ENCODE measurements at regions of chr1 and their contacts with region 1.

Region 1: DNA sequence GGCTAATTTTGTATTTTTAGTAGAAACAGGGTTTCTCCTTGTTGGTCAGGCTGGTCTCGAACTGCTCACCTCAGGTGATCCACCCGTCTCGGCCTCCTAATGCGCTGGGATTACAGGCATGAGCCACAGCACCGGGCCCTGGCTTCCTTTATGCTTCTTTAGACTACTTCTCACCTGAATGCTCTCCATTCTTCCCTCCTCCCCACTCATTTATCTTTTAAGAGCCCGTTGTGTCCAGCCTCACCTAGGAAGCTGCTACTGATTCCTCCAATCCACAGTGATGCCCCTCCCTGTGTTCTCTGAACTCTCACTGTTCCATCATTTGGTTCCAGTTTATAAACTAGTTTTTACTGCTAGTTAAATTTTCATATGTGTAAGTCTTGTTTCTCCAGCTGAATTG is 44.9 kb upstream of the NR5A2 start:
- DNase-seq: no peak
- ATAC-seq: peak; percentile 79
- H3K4me3 ChIP-seq: no peak overlapping the region
- H3K27ac ChIP-seq: no peak overlapping the region
- H3K4me1 ChIP-seq: no peaks in the 10 kb centered on the region
- H3K27me3 ChIP-seq: no peaks in the 10 kb centered on the region
- CTCF ChIP-seq: no peak

Region 2: DNA sequence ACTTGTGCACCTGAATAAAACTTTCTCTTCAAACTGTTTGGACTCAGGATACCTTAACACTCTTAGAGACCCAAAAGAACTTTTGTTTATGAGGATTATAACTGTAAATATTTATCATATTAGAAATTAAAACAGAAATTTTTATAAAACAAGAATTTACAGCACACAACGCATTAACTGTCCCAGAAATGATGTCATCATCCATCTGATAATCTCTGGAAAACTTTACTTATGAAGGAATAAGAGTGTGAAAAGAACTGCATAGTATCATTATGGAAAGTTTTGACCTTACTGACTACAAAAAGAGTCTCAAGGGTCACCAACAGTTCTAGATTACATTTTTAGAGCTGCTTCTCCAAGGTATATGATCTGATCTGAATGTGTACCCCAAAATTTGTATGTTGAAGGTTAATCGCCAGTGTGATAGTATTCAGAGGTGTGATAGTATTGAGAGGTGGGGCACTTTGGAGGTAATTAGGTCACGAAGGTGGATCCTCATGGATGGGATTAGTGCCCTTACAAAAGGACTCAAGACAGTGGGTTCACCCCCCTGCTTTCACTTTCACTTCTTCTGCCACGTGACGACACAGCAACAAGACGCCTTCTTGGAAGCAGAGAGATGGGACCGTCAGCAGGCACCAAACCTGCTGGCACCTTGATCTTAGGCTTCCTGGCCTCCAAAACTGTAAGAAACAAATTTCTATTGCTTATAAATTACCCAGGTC is 50.8 kb before region 1 on chr1:
- CTCF ChIA-PET with region 1: no interaction called
- POLR2A ChIA-PET with region 1: no interaction called
- intact Hi-C with region 1: no loop called
- DNase-seq: peak; percentile 81
- ATAC-seq: peak; percentile 91
- H3K4me3 ChIP-seq: peak overlapping the region; percentile 62
- H3K27ac ChIP-seq: no peak overlapping the region
- H3K4me1 ChIP-seq: peaks cover 4% of the 10 kb centered on the region; the same call in 1 of the 2 replicates
- H3K27me3 ChIP-seq: 0 out of 2 replicates have a peak, but pooled peaks cover 5% of the 10 kb centered on the region
- CTCF ChIP-seq: no peak

Region 3: GRCh38 chr1:200038981-200039848 is 56.6 kb after region 1 on chr1:
- CTCF ChIA-PET with region 1: no interaction called
- POLR2A ChIA-PET with region 1: no interaction called
- intact Hi-C with region 1: loop called (anchors 10 kb)
- DNase-seq: peak; percentile 71
- ATAC-seq: peak; percentile 84
- H3K4me3 ChIP-seq: peak overlapping the region; percentile 70
- H3K27ac ChIP-seq: no peak overlapping the region
- H3K4me1 ChIP-seq: peaks cover 7% of the 10 kb centered on the region; the same call in 1 of the 2 replicates
- H3K27me3 ChIP-seq: peaks cover 79% of the 10 kb centered on the region
- CTCF ChIP-seq: no peak; the same call in 1 of the 2 replicates